ENCODE measurements at regions of chr1 and their contacts with region 1.

Region 1: DNA sequence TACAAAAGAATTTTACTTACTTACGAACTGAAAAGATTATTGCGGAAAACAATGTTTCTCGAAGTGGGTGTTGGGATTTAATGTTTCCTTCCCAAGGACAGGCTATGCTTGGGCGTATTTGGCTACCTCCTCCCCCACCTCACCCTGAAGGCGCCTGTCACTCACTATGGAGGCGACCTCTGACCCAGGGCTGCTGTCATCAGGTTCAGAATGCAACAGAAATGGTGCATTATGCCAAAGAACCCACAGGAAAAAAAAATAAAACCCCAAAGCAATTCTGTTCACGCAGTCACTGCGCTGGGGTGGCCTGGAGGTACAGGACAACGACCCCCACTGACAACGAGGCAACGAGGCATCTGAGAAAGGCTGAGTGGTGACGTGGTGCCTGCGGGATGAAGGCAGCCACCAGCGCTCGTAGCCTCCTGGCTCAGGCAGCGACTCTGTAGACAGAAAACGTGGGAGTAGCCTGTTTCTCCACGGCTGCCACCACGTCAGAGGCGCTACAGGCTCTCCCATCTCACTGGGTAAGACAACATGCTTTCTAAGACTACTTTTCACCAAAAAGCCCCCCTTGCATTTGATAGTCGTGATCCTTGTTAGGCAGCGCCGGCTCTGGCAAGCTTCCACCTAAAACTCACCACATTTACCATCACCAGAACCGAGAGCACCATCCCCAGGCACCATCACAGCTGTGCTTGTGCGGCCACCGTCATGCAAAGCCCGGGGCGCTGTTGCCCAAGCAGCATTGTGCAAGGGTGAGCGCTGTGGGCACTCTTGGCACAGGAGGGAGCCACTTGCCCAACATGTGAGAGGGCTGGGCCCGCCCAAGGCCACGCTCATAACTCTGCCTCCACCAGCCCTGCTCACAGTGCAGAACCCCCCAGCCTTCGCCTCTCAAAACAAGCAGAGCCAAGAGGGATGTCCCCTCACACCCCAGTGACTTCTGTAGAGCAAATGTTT is 14.3 kb downstream of the NADK start:
- DNase-seq: no peak
- ATAC-seq: peak; percentile 79

Region 2: DNA sequence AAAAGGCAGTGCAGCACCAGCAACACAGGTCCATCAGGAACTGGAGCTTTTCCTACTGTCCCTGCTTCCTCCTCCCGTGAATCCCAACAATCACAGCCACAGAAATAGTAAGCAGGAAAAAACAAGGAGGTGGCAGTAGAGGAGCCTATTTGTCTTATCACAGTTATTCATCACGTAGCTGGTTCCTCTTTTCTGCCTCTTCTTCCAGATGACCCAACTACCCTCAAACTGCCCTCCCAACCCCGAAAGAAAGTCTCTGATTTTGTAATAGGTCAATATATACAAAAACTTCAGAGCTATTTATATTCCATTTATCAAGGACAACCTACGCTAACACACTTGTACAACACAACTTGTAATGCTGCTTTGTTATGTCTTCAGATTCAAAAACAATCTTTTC is 105.5 kb after region 1 on chr1:
- intact Hi-C with region 1: no loop called
- DNase-seq: no peak
- ATAC-seq: no peak

Region 3: DNA sequence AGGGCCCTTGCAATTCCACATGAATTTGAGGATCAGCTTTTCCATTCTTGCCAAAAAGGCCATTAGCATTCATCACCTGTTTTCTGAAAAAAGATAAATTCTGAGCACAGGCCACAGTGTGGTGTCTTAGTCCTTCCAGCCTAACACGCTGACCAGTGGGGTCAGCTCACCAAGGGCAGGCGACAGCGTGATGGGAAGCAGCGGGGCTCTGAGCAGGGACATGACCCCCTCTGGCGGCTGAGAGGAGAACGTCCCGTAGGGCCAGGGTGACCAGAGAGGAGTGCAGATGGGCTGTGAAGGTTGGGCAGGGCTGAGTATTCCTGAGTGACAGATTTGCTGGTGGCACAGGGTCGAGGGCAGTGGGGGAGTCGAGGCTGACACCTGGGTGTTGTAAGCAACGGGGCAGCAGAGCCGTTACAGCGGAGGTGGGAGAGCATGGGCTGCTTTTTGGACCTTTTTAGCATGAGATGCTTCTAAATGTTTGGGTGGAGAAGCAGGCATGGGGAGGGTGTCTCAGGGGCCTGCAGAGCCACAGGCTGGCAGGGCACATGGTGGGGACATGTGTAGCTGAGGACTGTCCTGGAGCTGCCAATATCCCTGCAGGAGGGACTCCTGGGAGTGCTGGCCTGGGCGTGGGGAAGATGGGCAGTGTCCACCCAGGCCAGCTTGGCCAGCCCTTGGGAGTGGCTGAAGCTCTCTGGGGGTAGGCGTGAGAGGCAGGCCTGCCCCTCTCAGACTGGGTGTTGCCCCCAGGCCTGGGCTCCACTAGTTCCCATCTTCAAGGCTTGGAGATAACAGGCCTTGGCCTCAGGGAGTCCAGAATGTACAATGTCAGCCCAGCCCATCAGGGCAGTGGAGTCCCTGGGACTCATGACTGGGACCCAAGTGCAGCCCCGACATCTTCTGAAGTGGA is 142.5 kb after region 1 on chr1:
- intact Hi-C with region 1: loop called (anchors 10 kb)
- DNase-seq: peak; percentile 91
- ATAC-seq: peak; percentile 76

Region 4: GRCh38 chr1:2952361-2952760 is 1188.4 kb after region 1 on chr1:
- intact Hi-C with region 1: no loop called
- DNase-seq: no peak
- ATAC-seq: no peak

Measured in sciatic nerve (tissue), 2 donors.